Sciatic nerve (tissue), 2 donors: ENCODE measurements at regions of chr4 and their contacts with region 1.

Region 1: DNA sequence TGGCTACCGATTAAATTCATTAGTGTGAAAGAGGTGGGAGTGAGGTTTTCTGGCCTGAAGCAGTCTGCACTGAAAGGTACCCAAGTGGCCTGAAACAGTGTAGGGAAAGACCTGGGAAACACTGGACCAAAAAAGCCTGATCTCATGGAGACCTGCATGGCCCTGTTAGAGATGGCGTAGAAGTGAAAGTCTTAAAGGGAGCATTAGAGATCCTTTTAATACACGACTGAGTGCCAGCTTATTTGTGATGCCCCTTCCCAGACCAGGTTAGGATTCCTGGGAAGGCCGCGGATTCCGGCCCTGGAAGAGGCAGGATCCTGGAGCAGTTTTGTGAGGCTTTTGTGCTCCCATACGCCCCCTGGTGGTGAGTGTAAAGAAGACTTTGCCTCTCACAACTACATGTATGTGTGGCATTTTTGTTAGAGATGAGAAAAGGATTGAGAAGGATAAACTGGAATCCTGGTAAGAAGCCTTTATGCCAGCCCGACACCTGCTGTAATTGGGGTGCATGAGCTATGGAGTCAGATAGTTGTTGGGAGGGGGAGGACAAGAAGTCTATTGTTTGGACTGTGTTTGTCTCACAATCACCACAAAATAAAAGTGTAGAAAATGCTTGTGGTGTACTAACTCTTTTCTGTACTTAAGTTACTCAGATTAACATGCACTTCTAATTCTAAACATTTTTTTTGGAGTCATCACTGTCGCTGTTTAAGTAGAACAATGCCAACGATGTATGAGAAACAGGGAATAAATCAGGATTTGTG is 54.0 kb downstream of the JADE1 start:
- DNase-seq: peak; percentile 89
- ATAC-seq: peak; percentile 76

Region 2: GRCh38 chr4:128454281-128455075 is 409.0 kb before region 1 on chr4:
- intact Hi-C with region 1: loop called (anchors 10 kb)
- DNase-seq: peak; percentile 87
- ATAC-seq: peak; percentile 97

Region 3: DNA sequence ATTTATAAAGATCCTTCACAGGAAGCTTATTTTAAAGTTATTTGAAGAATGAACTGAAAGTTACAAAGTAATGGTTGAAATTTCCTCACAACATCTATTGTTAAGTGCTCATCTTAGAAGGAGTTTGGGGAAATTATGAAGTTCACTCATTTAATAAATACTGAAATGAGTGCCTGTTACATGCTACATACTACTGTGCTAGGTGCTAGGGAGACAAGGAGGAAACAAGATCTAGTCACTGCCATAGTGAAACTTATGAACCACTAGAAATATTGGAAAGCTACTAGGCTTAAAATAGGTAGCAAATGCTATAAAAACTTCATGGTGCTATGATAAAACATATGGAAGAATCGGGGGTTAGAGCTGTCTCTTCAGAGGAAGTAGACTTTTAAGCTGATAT is 43.1 kb after region 1 on chr4:
- intact Hi-C with region 1: no loop called
- DNase-seq: no peak
- ATAC-seq: no peak